ENCODE measurements at regions of chr4 and their contacts with region 1.

Region 1: DNA sequence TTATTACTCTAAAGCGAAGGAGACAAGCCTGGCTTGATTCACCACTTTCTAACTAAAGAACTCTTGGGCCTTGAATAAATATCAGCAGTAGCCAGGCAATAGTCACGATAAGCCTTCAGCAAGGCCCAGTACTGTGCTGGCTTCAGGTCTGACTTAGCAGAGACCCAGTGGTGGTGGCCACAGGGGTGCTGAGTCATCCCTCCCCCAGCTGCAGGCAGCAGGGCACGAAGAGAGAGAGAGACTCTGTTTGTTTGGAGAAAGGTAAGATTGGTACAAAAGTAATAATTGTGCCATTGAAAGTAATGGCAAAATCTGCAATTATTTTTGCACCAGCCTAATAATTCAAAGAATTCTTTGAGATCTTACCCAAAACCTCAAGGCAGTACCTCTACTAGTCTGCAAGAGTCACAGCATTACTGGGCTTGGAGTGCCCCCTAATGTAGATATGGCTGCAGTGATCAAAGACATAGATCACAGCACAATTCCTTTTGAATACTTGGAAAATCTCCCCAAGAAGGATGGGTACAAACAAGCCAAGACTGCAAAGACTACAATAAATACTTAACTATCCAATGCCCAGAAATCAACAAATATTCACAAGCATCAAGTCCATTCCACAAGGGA is 159.5 kb upstream of the USP38 start:
- DNase-seq: peak; percentile 40
- ATAC-seq: peak; percentile 87
- H3K4me3 Mint-ChIP-seq: no peak overlapping the region
- H3K27ac Mint-ChIP-seq: no peak overlapping the region
- H3K4me1 Mint-ChIP-seq: peaks cover 2% of the 10 kb centered on the region
- H3K27me3 Mint-ChIP-seq: no peaks in the 10 kb centered on the region
- CTCF ChIP-seq: no peak

Region 2: GRCh38 chr4:142883040-142883832 is 142.0 kb before region 1 on chr4:
- CTCF ChIA-PET with region 1: interaction called, 23 read pairs
- POLR2A ChIA-PET with region 1: no interaction called
- DNase-seq: peak; percentile 24
- ATAC-seq: peak; percentile 93
- H3K4me3 Mint-ChIP-seq: no peak overlapping the region
- H3K27ac Mint-ChIP-seq: no peak overlapping the region
- H3K4me1 Mint-ChIP-seq: no peaks in the 10 kb centered on the region
- H3K27me3 Mint-ChIP-seq: no peaks in the 10 kb centered on the region
- CTCF ChIP-seq: no peak

Region 3: GRCh38 chr4:142961866-142962265 is 63.3 kb before region 1 on chr4:
- CTCF ChIA-PET with region 1: no interaction called
- POLR2A ChIA-PET with region 1: no interaction called
- DNase-seq: no peak
- ATAC-seq: peak; percentile 57
- H3K4me3 Mint-ChIP-seq: no peak overlapping the region
- H3K27ac Mint-ChIP-seq: no peak overlapping the region
- H3K4me1 Mint-ChIP-seq: peaks cover 13% of the 10 kb centered on the region
- H3K27me3 Mint-ChIP-seq: no peaks in the 10 kb centered on the region
- CTCF ChIP-seq: no peak

Region 4: DNA sequence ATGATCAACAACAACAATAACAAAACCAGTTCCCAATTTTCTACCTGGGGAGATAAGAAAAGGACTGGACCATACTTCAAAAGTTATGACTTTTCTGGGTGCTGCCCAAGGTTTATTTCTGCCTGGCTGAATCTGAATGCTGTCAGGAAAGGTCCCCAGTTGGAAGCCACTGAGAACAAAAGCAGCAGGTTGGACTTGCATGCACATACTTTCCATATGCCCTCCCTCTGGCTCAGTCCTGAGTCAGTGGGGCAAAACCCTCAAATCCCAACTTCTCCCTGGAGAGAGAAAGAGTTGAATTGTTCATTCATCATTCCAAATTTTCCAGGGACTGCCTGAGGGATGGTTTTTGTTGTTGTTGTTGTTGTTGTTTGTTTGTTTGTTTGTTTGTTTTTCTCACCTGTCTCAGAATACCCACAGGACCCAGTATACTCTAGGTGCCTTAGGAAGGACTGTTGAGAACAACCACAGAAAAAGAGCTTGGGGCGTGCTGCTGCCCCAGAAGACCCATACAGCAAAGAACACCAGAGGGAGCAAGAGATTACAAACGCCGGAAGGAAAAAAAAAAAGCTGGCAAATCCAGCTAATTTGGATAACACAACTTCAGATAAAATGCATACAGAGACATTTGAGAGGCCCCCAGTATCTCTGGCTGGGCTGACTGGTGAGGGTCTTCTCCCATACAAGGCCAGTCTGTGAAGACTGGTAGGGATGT is 40.2 kb before region 1 on chr4:
- CTCF ChIA-PET with region 1: interaction called, 18 read pairs
- POLR2A ChIA-PET with region 1: no interaction called
- DNase-seq: peak; percentile 18
- ATAC-seq: peak; percentile 98
- H3K4me3 Mint-ChIP-seq: peak overlapping the region; percentile 21
- H3K27ac Mint-ChIP-seq: peak overlapping the region; percentile 65
- H3K4me1 Mint-ChIP-seq: peaks cover 21% of the 10 kb centered on the region
- H3K27me3 Mint-ChIP-seq: no peaks in the 10 kb centered on the region
- CTCF ChIP-seq: no peak

Measured in WTC11 (cell line).